Psoas muscle (tissue), 8 donors: ENCODE measurements at regions of chr9 and their contacts with region 1.

Region 1: DNA sequence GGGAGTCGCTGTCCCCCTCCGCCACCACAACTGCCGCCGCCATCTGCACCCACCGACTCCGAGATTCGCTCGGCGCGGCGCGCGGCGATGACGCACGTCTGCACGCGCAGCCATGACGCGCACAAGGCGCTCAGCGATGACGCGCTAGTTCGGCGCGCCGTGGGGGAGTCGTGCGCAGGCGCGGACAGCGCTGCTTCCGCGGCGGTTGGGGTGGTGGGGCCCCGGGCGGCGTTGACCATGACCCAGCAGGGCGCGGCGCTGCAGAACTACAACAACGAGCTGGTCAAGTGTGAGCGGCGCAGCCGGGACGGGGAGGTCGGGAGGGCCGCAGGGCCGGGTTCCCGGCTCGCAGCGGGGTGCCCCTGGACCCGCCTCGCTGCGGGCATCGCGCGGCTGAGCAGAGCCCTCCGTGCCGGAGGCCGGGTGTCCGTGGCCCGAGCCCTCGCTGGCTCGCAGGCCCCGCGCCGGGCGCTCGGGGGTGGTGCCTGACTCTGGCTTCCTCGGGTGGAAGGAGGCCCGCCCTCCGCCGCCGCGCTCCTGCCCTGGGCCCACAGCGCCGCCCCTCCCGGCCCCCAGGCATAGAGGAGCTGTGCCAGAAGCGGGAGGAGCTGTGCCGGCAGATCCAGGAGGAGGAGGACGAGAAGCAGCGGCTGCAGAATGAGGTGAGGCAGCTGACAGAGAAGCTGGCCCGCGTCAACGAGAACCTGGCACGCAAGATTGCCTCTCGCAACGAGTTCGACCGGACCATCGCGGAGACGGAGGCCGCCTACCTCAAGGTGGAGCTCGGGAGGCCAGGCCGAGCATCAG is at the starts of genes ANAPC2 and SSNA1:
- DNase-seq: peak; percentile 92 to 97
- ATAC-seq: peak; percentile 93 to 95 (median 94)
- H3K4me3 ChIP-seq: peak within 1 kb of the TSS; percentile 93
- H3K27ac ChIP-seq: peak within 1 kb of the TSS; percentile 97
- H3K4me1 ChIP-seq: peaks cover 43% of the 10 kb centered on the region
- H3K27me3 ChIP-seq: no peaks in the 10 kb centered on the region
- CTCF ChIP-seq: peak; percentile 12
- total RNA-seq, gene ANAPC2: 20.5 to 32.1 (median 24.3) TPM
- total RNA-seq, gene SSNA1: 51.5 to 65.4 (median 54.4) TPM

Region 2: GRCh38 chr9:137205126-137206069 is 16.7 kb after region 1 on chr9 and contains the starts of genes NDOR1 and TMEM203:
- intact Hi-C with region 1: loop called in 1 of 2 experiments (anchors 1 kb)
- DNase-seq: peak; percentile 94 to 96
- ATAC-seq: peak; percentile 64 to 78 (median 69)
- H3K4me3 ChIP-seq: peak within 1 kb of the TSS; percentile 81
- H3K27ac ChIP-seq: peak within 1 kb of the TSS; percentile 84
- H3K4me1 ChIP-seq: peaks cover 49% of the 10 kb centered on the region
- H3K27me3 ChIP-seq: no peaks in the 10 kb centered on the region
- CTCF ChIP-seq: no peak
- total RNA-seq, gene NDOR1: 2.2 to 4.4 (median 3.7) TPM
- total RNA-seq, gene TMEM203: 31.2 to 40.1 (median 36.0) TPM

Region 3: DNA sequence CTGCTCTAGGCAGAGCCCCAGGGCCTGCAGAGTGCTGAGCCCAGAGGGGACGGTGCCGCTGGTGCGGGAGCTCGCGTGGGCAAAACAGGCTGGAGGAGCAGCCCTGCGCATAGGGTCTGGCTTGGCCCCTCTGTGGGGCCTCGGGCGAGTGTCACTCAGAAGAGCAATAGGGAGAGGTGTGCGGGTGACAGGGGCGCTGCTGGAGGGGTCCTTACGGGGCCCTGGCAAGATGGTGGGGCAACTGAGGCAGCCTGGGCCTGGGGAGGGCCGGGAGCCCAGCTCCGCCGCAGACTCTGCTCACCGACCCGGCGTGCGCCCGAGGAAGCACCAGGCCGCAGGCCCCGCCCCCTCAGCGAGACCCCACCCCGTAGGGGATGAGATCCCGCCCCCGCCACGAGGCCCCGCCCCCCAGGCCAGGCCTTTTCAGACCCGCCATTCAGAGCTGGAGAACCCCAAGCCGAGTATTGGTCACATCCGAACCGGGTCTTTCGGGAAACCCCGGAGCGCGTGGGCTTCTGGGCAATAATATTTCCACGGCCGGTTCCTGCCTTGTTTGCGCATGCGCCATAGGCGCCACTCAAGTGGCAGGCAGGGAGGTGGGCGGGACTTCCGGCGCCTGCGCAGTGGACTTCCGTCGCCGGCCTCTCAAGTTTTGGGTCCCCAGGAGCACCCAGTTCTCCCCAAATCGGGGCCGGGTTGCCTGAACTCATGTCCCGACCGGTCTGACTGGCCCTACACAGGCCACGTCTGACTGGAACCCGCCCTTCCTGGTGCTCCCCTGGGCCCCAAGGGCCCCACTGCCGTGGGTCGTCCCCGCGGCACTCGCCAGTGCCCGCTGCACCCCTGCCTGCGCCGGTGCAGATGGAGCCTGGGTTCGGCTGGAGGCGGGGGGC is 34.6 kb after region 1 on chr9:
- intact Hi-C with region 1: loop called (anchors 2 to 5 kb)
- DNase-seq: peak; percentile 98 to 99
- ATAC-seq: peak; percentile 92 to 93 (median 92)
- H3K4me3 ChIP-seq: peak overlapping the region; percentile 76
- H3K27ac ChIP-seq: peak overlapping the region; percentile 83
- H3K4me1 ChIP-seq: peaks cover 11% of the 10 kb centered on the region
- H3K27me3 ChIP-seq: peaks cover 0 to 12% (median 0%) of the 10 kb centered on the region in 3 donors
- CTCF ChIP-seq: no peak

Region 4: DNA sequence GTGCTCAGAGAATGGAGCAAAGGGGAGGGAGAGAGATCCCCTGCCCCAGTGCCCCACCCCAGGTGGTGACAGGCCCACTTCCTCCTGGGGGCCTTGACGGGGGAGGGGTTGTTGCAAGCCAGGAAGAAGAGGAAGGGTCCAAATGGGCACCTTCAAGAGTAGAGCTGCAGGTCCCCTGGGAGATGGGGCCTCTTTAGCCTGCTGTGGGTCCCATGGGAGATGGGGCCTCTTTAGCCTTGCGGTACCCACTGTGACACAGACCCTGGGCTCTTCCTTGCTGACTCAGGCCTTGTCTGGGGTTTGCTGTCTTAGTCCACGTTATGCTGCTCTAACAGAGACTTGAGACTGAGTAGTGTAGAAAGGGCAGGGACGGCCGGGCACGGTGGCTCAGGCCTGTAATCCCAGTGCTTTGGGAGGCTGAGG is 79.3 kb after region 1 on chr9:
- intact Hi-C with region 1: no loop called
- DNase-seq: no peak
- ATAC-seq: no peak
- H3K4me3 ChIP-seq: peak overlapping the region; percentile 65
- H3K27ac ChIP-seq: peak overlapping the region; percentile 91
- H3K4me1 ChIP-seq: peaks cover 19% of the 10 kb centered on the region
- H3K27me3 ChIP-seq: no peaks in the 10 kb centered on the region
- CTCF ChIP-seq: no peak